Right ventricle myocardium superior (tissue), 1 donor: ENCODE measurements at regions of chr22 and their contacts with region 1.

Region 1: DNA sequence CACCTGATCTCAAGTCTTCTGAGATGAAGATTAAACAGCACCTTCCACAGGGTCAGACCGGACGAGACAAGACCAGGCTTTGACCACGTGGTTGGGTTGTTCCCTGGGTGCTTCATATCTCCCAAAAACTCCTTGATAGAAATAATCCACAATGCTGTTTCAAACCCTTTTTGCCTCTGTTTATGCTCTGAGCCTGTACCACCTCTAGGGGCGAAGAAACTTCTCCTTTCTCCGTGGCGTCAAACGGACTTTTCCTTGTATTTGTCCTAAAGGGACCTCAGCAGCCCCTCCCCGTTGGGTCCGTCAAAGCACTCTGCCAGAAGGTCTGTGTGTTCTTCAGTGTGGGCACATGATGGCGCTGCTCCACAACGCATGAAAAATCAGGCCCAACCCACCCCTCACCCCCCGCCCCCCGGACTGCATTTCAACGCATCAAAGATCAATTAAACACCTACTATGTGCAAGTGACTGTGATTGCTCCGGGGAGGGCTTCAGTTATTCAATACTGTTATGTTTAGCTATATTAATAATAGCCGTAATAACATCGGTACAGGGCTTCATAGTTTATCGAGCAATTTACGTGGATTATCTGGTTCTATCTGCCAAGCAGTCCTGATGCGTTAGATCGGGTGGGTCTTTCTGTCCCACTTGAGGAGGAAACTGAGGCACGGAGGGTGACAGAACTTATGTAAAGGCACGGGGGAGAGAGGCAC is 17.3 kb upstream of the EIF3D start:
- DNase-seq: no peak
- ATAC-seq: peak; percentile 77

Region 2: DNA sequence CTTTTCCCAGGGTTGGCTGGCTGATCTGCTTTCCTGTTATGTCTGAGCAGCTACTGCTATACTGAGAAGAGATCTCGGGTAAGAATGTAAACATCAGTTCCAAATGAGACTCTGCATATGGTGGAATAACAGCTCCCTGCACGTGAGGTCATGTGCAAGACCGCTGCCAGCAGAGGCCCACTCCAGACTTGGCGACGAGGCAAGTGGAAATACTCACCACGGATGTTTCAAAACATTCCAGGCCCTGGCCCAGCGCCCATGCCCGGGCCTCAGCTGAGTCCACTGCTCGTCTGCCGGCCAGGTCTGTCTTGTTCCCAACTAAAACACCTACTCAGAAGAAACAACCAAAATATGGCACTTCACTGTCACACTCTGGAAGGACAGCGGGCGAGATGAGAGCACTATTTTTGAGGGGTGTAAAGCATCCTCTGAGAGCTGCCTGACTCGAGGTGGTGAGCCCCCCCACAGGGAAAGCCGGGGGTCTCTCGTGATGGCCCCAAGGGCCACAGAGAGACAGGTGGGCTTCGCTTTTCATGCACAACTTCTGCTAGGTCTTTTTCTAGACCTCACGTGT is 216.5 kb after region 1 on chr22:
- intact Hi-C with region 1: loop called (anchors 10 kb)
- DNase-seq: peak; percentile 75
- ATAC-seq: peak; percentile 87

Region 3: GRCh38 chr22:36856121-36856791 is 310.0 kb after region 1 on chr22:
- intact Hi-C with region 1: loop called (anchors 5 kb)
- DNase-seq: peak; percentile 94
- ATAC-seq: peak; percentile 94